ENCODE measurements at regions of chr14 and their contacts with region 1.

Region 1: GRCh38 chr14:50658203-50658602 is 9.9 kb downstream of the SAV1 start:
- DNase-seq: no peak
- ATAC-seq: no peak
- H3K4me3 ChIP-seq: no peak overlapping the region
- H3K4me3 Mint-ChIP-seq: no peak overlapping the region
- H3K27ac ChIP-seq: no peak overlapping the region
- H3K27ac Mint-ChIP-seq: no peak overlapping the region
- H3K4me1 ChIP-seq: peaks cover 0 to 22% of the 10 kb centered on the region in 2 donors
- H3K4me1 Mint-ChIP-seq: peaks cover 47% of the 10 kb centered on the region
- H3K27me3 ChIP-seq: no peaks in the 10 kb centered on the region
- H3K27me3 Mint-ChIP-seq: no peaks in the 10 kb centered on the region
- CTCF ChIP-seq: no peak

Region 2: DNA sequence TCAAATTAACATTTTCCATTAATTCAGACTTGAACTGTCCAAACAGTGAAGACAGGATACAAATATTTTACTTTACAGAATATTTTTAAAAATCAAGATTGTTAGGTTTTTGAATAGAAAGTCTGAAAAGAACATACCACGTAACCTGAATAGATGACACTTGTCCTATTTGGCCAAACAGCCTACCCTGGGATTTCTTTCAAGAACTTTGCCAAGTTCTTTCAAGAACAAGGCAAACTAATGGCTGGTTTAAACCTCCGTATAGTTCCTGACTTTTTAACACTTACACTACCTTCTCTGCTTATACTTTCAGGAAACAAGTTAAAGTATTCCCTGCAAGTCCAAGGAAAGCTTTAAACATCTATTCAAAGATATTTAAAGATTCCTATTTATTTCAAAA is 160.9 kb before region 1 on chr14:
- CTCF ChIA-PET with region 1: no interaction called
- POLR2A ChIA-PET with region 1: no interaction called
- intact Hi-C with region 1: no loop called
- DNase-seq: no peak
- ATAC-seq: no peak
- H3K4me3 ChIP-seq: no peak overlapping the region
- H3K4me3 Mint-ChIP-seq: no peak overlapping the region
- H3K27ac ChIP-seq: no peak overlapping the region
- H3K27ac Mint-ChIP-seq: no peak overlapping the region
- H3K4me1 ChIP-seq: no peaks in the 10 kb centered on the region
- H3K4me1 Mint-ChIP-seq: no peaks in the 10 kb centered on the region
- H3K27me3 ChIP-seq: no peaks in the 10 kb centered on the region
- H3K27me3 Mint-ChIP-seq: no peaks in the 10 kb centered on the region
- CTCF ChIP-seq: no peak

Region 3: GRCh38 chr14:50667996-50668825 is 10.0 kb after region 1 on chr14 and contains the start of gene SAV1:
- CTCF ChIA-PET with region 1: interaction called, 5 read pairs
- POLR2A ChIA-PET with region 1: interaction called, 8 read pairs
- intact Hi-C with region 1: loop called (anchors 2 kb)
- DNase-seq: peak; percentile 80
- ATAC-seq: peak; percentile 63
- H3K4me3 ChIP-seq: peak within 1 kb of the TSS; percentile 47 to 93 (median 70)
- H3K4me3 Mint-ChIP-seq: no peak within 1 kb of the TSS
- H3K27ac ChIP-seq: peak within 1 kb of the TSS; percentile 83 to 91
- H3K27ac Mint-ChIP-seq: no peak within 1 kb of the TSS
- H3K4me1 ChIP-seq: peaks cover 22 to 42% of the 10 kb centered on the region in 2 donors
- H3K4me1 Mint-ChIP-seq: peaks cover 26% of the 10 kb centered on the region
- H3K27me3 ChIP-seq: no peaks in the 10 kb centered on the region
- H3K27me3 Mint-ChIP-seq: no peaks in the 10 kb centered on the region
- CTCF ChIP-seq: no peak
- total RNA-seq, gene SAV1: 36.1 and 39.7 TPM in 2 replicates